ENCODE measurements at regions of chr20 and their contacts with region 1.

Region 1: GRCh38 chr20:37990571-37991151 is 42.6 kb downstream of the TTI1 start:
- DNase-seq: peak; percentile 56
- H3K4me3 ChIP-seq: no peak overlapping the region
- H3K27ac ChIP-seq: peak overlapping the region in 1 of 2 donors; percentile 67
- H3K4me1 ChIP-seq: peaks cover 37% of the 10 kb centered on the region
- H3K27me3 ChIP-seq: no peaks in the 10 kb centered on the region
- CTCF ChIP-seq: no peak
- POLR2A ChIP-seq: no peak

Region 2: GRCh38 chr20:37007898-37008649 is 982.6 kb before region 1 on chr20:
- intact Hi-C with region 1: no loop called
- DNase-seq: no peak
- H3K4me3 ChIP-seq: no peak overlapping the region
- H3K27ac ChIP-seq: no peak overlapping the region
- H3K4me1 ChIP-seq: no peaks in the 10 kb centered on the region
- H3K27me3 ChIP-seq: no peaks in the 10 kb centered on the region
- CTCF ChIP-seq: no peak
- POLR2A ChIP-seq: no peak

Region 3: GRCh38 chr20:37651932-37652331 is 338.7 kb before region 1 on chr20:
- intact Hi-C with region 1: loop called (anchors 10 kb)
- DNase-seq: peak; percentile 21
- H3K4me3 ChIP-seq: no peak overlapping the region
- H3K27ac ChIP-seq: no peak overlapping the region
- H3K4me1 ChIP-seq: no peaks in the 10 kb centered on the region
- H3K27me3 ChIP-seq: no peaks in the 10 kb centered on the region
- CTCF ChIP-seq: peak in 3 of 4 experiments; percentile 30 to 61 (median 44)
- POLR2A ChIP-seq: no peak

Region 4: DNA sequence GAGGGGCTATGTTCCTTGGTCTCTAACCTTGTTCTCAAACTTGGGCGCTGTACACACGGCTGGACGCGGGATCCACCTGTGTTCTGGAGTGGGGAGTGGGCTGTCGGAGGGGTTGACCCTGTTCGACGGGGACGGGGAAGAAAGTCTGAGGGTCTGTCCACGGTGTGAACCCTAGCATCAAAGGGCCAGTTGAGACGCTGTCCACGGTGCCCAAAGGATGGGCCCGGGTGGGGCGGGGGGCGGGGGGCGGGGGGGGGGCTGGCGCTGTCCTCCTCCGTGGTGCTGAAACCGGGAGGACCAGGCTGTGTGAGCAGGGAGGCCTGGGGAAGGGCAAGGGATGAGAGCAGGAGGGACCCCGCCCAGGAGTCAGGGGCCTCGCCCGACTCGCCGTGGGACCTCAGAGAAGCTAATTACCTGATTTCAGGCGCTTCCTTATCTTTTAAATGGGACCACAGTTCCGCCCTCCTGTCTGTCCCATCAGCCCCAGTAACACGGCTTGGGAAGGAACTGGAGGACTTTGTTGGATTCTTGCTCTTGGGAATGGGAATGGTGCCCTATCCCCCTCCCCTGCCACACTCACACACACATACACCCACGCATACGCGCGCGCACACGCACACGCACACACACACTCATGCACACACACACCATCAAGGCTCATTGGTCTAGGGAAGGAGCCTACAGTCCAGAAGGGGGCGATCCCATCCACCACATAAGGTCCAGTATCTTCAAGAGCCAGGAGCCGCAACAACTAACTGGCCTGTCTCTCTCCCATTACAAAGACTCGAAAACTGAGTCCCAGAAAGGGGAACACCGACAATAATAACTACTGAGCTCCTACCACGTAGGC is 88.8 kb before region 1 on chr20:
- intact Hi-C with region 1: loop called (anchors 5 kb)
- DNase-seq: peak; percentile 41
- H3K4me3 ChIP-seq: no peak overlapping the region
- H3K27ac ChIP-seq: no peak overlapping the region
- H3K4me1 ChIP-seq: peaks cover 4% of the 10 kb centered on the region
- H3K27me3 ChIP-seq: no peaks in the 10 kb centered on the region
- CTCF ChIP-seq: peak in 3 of 4 experiments; percentile 21 to 46 (median 38)
- POLR2A ChIP-seq: no peak

Measured in prostate gland (tissue), 2 donors.